ENCODE measurements at regions of chr2 and their contacts with region 1.

Region 1: DNA sequence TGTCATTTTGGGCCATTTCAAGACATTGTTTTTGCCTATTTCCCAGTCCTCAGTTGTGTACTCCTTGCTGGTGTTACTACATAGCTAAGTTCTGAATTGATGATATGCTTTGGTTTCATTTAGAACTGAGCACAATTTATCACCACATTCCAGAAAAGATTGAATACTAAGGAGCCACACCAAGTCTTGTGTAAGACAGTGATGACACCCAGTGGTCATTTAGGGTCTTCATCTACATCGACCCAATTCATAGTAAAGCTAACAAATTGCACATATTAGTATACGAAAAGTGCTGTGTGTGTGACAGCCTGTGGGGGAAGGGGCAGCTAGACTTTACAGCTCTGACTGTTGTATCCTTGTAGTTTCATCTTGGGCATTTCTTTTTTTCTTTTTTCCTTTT is 10.9 kb upstream of the DLX2 start:
- DNase-seq: no peak
- H3K4me3 ChIP-seq: no peak overlapping the region
- H3K27ac ChIP-seq: no peak overlapping the region
- H3K27me3 ChIP-seq: peaks cover 0 to 19% (median 3%) of the 10 kb centered on the region in 45 donors
- CTCF ChIP-seq: peak in 54 of 56 donors; percentile 29 to 77 (median 58)

Region 2: DNA sequence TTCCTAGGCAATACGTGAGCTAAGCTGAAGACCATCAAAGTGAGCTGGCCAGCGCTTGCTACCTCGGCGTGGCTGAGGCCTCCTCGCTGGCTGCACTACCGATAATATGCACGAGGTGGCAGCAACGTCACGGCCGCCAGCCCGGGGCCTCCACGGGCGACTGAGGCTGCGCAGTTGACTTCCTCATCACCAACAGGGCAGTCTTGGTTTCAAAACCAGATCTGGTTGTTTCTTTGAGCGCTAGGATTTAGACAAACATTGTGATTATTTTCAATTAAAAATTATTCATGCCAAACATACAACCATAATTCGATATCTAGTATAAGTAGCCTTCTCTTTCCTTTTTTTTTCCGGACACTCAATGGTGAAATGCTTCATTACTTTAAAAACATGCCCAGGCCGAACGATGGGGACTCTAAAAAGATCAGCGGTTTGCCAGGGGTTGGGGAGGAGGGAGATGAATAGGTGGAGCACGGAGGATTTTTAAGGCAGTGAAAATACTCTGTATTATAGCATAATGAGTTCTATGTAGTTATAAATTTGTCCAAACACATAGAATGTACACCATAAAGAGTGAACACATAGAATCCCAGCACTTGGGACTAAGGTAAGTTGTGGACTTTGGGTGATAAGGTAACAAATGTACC is 539.3 kb before region 1 on chr2:
- intact Hi-C with region 1: loop called (anchors 2 to 10 kb)
- DNase-seq: peak; percentile 35 to 80 (median 64)
- H3K4me3 ChIP-seq: peak overlapping the region in 23 of 59 donors; percentile 3 to 44 (median 28)
- H3K27ac ChIP-seq: peak overlapping the region in 1 of 59 donors; percentile 12
- H3K27me3 ChIP-seq: peaks cover 0 to 5% (median 0%) of the 10 kb centered on the region in 45 donors
- CTCF ChIP-seq: peak; percentile 65 to 99 (median 95)

Region 3: DNA sequence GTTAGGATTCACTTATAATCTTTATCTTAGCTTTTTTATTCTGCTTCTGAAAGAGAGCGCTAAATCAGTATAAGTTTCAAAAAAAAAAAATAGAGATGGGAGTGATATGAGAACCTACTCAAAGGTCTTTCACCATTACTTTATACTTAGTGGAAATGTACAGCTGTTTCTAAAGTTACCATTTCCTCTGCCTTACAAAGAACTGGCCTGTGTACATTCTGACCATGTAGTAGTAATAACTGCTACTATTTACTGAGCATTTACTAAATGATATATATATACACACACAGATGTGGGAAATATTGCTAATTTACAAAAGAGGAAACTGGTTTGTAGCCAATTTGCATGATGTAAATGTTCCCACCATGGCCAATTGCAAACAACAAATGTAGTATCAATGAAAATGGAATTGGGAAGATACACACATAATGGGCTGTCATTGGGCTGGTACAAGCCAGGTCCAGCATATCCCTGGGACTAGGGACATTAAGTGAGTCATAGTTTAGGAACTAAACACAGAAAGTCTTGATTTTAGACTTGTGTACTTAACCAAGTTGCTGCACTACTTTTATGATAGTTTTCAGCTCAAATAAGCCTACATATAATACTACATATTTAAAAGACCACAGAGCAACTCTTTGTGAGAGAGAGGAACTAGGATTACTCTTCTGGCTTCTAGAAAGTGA is 359.2 kb before region 1 on chr2:
- intact Hi-C with region 1: no loop called
- DNase-seq: no peak
- H3K4me3 ChIP-seq: no peak overlapping the region
- H3K27ac ChIP-seq: no peak overlapping the region
- H3K27me3 ChIP-seq: no peaks in the 10 kb centered on the region
- CTCF ChIP-seq: no peak

Region 4: DNA sequence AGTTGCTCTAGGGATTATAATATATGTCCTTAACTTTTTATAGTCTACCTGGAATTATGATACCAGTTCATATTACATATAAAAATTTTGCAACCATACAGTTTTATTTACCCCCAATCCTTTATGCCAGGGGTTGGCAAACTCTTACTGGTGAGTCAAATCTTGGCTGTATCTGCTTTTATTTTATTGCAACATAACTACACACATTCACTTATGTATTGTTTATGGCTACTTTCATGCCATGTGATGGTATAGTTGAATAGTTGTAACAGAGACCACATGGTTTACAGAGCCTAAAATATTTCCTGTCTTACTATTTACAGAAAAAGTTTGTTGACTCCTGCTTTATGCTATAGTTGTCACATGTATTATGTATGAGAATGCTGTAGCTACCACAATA is 14.9 kb after region 1 on chr2:
- intact Hi-C with region 1: no loop called
- DNase-seq: no peak
- H3K4me3 ChIP-seq: no peak overlapping the region
- H3K27ac ChIP-seq: no peak overlapping the region
- H3K27me3 ChIP-seq: no peaks in the 10 kb centered on the region
- CTCF ChIP-seq: no peak